Posterior cingulate gyrus (tissue), 11 donors: ENCODE measurements at regions of chr3 and their contacts with region 1.

Region 1: GRCh38 chr3:124995460-124995994 is 60.3 kb downstream of the HEG1 start:
- DNase-seq: peak in 9 of 10 donors; percentile 40 to 95 (median 71)

Region 2: DNA sequence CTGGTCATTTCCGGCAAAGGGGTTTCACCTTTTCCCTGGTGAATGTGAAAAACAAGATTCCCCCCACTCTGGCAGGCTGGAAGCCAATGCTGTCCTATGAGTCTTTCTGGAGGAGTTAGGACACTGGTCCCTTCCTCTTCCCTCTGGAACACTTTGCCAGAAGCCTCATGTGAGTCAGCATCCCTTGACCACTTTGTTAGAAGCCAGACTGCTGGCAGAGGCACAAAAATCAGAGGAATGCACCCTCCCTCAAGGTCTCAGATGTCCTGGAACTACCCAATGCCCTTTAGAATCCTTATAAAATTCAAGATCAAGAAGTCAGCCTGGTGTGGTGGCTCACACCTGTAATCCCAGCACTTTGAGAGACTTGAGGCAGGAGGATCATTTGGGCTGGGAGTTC is 134.9 kb before region 1 on chr3:
- intact Hi-C with region 1: no loop called
- DNase-seq: no peak

Region 3: DNA sequence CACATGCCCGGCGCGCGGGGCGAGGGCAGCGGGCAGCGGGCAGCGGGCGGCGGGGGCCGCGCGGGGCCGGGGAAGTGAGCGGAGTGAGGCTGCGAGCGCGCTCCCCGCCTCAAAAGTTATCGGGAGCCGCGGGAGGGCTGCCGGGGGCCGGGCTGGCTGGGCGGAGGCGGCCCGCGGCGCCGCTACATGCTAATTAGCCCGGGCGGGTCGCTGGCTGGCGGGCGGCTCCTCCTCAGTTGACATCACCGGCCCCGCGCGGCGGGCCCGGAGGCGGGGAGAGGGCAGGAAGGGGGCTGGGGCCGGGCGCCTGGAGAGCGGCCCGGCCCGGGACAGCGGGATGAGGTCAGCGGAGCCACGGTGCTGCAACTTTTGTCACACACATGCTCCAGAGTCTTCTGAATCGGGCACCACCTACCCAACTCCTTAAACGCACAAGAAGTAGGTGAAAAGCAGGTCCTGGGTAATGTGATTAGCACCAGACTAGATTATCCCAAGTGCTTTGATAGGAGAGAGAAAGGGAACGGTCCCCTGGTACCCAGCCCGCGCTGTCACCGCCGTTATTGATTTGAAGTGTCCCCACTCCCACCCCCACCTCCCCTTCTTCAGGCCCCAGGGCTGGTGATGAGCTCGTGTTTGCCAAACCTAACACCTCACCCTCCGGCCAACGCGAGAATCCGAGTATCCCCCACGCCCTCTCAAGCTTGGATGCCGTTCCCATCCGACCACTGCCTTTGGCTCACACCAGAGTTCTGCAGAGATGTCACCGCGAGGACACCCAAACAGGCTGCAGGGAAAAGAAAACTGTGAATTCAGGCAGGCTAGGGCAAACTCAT is 60.6 kb after region 1 on chr3 and contains the start of gene HEG1:
- intact Hi-C with region 1: loop called (anchors 5 kb)
- DNase-seq: peak; percentile 58 to 95 (median 67)

Region 4: GRCh38 chr3:125165189-125165947 is 169.8 kb after region 1 on chr3:
- intact Hi-C with region 1: loop called (anchors 5 kb)
- DNase-seq: peak in 1 of 10 donors; percentile 32

Region 5: GRCh38 chr3:125437631-125438435 is 442.3 kb after region 1 on chr3:
- intact Hi-C with region 1: loop called (anchors 1 kb)
- DNase-seq: peak in 9 of 10 donors; percentile 36 to 93 (median 72)

Region 6: GRCh38 chr3:125585595-125586223 is 590.2 kb after region 1 on chr3:
- intact Hi-C with region 1: loop called (anchors 2 kb)
- DNase-seq: peak in 5 of 10 donors; percentile 16 to 66 (median 62)